Heart right ventricle (tissue), 16 donors: ENCODE measurements at regions of chr13 and their contacts with region 1.

Region 1: GRCh38 chr13:110361365-110361911 is 54.4 kb downstream of the COL4A2 start:
- DNase-seq: peak; percentile 67 to 80
- ATAC-seq: peak; percentile 81 to 94 (median 90)
- H3K4me3 ChIP-seq: peak overlapping the region in 1 of 10 donors; percentile 3
- H3K27ac ChIP-seq: peak overlapping the region; percentile 47 to 93 (median 83)
- H3K4me1 ChIP-seq: peaks cover 14 to 68% (median 49%) of the 10 kb centered on the region in 9 donors
- H3K27me3 ChIP-seq: no peaks in the 10 kb centered on the region
- CTCF ChIP-seq: no peak

Region 2: GRCh38 chr13:109615721-109616375 is 745.6 kb before region 1 on chr13:
- intact Hi-C with region 1: no loop called
- DNase-seq: no peak
- ATAC-seq: no peak
- H3K4me3 ChIP-seq: no peak overlapping the region
- H3K27ac ChIP-seq: no peak overlapping the region
- H3K4me1 ChIP-seq: peaks cover 0 to 5% (median 0%) of the 10 kb centered on the region in 9 donors
- H3K27me3 ChIP-seq: peaks cover 0 to 19% (median 0%) of the 10 kb centered on the region in 7 donors
- CTCF ChIP-seq: no peak

Region 3: GRCh38 chr13:110023729-110024644 is 337.5 kb before region 1 on chr13:
- intact Hi-C with region 1: no loop called
- DNase-seq: peak; percentile 29 to 47
- ATAC-seq: peak; percentile 67 to 98 (median 93)
- H3K4me3 ChIP-seq: no peak overlapping the region
- H3K27ac ChIP-seq: peak overlapping the region in 9 of 10 donors; percentile 46 to 87 (median 70)
- H3K4me1 ChIP-seq: peaks cover 0 to 16% (median 7%) of the 10 kb centered on the region in 9 donors
- H3K27me3 ChIP-seq: no peaks in the 10 kb centered on the region
- CTCF ChIP-seq: no peak

Region 4: GRCh38 chr13:110209950-110210603 is 151.4 kb before region 1 on chr13:
- intact Hi-C with region 1: no loop called
- DNase-seq: no peak
- ATAC-seq: no peak
- H3K4me3 ChIP-seq: no peak overlapping the region
- H3K27ac ChIP-seq: no peak overlapping the region
- H3K4me1 ChIP-seq: peaks cover 0 to 18% (median 4%) of the 10 kb centered on the region in 9 donors
- H3K27me3 ChIP-seq: no peaks in the 10 kb centered on the region
- CTCF ChIP-seq: no peak

Region 5: DNA sequence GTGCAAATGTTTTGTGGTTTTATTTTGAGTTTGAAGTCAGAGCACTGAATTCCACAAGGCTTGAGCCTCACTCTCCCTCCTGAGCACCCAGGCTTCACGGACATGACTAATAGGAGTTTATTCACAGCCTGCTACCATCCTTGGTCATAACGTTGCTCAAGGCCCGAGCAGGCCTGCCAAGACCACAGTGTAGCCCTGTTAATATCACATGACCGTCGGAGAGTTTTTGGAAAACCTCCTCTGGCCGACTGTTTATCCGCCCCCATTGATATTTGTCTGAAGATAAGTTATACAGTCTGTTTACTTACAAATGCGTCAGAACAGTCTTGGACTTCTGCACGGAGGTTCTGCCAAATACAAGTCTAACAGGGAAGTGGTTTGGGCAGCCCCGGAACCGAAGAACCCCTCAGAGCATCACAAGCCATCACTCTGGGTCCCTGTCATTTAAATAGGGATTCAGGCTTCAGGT is 35.5 kb after region 1 on chr13:
- intact Hi-C with region 1: loop called in 1 of 10 experiments (anchors 5 kb)
- DNase-seq: peak; percentile 77 to 83
- ATAC-seq: peak; percentile 87 to 97 (median 90)
- H3K4me3 ChIP-seq: peak overlapping the region in 4 of 10 donors; percentile 12 to 34 (median 21)
- H3K27ac ChIP-seq: peak overlapping the region; percentile 69 to 94 (median 81)
- H3K4me1 ChIP-seq: peaks cover 13 to 89% (median 72%) of the 10 kb centered on the region in 9 donors
- H3K27me3 ChIP-seq: peaks cover 0 to 4% (median 0%) of the 10 kb centered on the region in 7 donors
- CTCF ChIP-seq: no peak